ENCODE measurements at regions of chr3 and their contacts with region 1.

Region 1: DNA sequence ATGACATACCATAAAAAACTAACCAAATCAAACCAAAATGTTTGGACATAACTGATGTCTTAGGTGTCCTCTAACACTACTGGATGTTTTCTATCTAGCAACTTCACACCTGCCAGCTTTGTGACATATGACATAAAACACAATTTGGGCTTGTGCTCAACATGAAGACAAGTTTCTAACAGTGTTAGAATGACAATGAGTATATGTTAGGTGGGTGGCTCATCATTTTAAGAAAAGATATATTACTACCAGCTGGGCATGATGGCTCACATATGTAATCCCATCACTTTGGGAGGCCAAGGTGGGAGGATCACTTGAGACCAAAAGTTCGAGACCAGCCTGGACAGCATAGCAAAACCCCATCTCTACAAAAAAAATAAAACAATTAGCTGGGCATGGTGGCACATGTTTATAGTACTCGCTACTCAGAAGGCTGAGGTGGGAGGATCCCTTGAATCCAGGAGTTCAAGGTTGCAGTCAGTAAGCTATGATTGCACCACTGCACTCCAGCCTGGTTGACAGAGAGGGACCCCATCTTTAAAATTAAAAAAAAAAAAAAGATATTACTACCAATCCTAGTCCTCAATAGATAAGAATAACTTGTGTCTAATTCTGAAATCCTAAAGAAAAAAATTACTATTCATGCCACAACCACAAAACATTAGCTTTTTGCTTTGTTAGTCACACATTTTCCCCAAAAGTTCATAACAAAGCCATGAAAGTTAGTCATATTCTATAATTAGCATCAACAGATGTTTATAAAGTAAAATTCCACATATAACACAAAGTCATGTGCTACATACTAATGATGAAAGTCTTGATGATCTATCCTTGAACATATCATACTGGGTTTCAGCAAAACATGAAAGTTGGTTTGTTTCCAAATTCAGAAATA is 59.9 kb downstream of the LRRFIP2 start:
- DNase-seq: peak; percentile 6
- H3K4me3 Mint-ChIP-seq: no peak overlapping the region
- H3K27ac Mint-ChIP-seq: no peak overlapping the region
- H3K4me1 Mint-ChIP-seq: peaks cover 21% of the 10 kb centered on the region
- H3K27me3 Mint-ChIP-seq: no peaks in the 10 kb centered on the region

Region 2: GRCh38 chr3:37054370-37054769 is 60.1 kb before region 1 on chr3:
- CTCF ChIA-PET with region 1: no interaction called
- intact Hi-C with region 1: loop called (anchors 2 kb)
- DNase-seq: no peak
- H3K4me3 Mint-ChIP-seq: no peak overlapping the region
- H3K27ac Mint-ChIP-seq: peak overlapping the region; percentile 66
- H3K4me1 Mint-ChIP-seq: peaks cover 13% of the 10 kb centered on the region
- H3K27me3 Mint-ChIP-seq: no peaks in the 10 kb centered on the region

Region 3: GRCh38 chr3:37129871-37130270 is 15.4 kb after region 1 on chr3:
- CTCF ChIA-PET with region 1: no interaction called
- intact Hi-C with region 1: no loop called
- DNase-seq: no peak
- H3K4me3 Mint-ChIP-seq: no peak overlapping the region
- H3K27ac Mint-ChIP-seq: no peak overlapping the region
- H3K4me1 Mint-ChIP-seq: peaks cover 10% of the 10 kb centered on the region
- H3K27me3 Mint-ChIP-seq: no peaks in the 10 kb centered on the region

Region 4: DNA sequence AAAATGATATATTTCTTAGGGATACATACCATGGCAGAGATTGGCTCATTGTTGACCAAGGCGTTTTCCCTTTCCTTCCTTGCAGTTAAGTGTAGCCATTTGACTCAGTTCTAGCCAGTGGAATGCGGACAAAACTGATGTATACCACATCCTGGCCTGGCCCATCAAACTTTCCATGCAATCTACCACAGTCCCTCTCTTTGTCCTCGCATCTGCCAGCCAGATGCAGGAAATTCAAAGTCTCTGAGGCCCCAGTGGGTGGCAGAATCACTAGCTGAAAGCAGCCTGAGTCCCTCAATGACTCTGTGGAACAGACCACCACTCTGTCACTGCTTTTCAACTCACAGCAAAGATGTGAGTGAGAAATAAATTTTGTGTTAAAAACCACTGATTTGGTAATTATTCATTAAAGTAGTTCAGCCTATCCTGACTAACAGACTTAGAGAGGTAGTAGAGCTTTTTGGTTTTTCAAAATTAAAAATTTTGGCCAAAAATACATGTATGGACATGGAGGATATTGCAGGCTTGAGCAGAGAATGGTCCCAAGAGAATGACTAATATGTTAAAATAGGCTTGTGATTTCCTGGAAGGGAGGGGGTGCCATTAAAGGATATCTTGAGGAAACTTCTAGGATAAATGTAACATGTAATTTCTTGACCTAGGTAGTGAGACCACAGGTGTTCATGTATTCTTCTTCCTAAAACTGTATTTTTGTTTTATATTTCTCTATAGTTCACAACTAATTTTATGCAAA is 48.9 kb after region 1 on chr3:
- CTCF ChIA-PET with region 1: interaction called, 4 read pairs
- intact Hi-C with region 1: loop called (anchors 2 kb)
- DNase-seq: peak; percentile 49
- H3K4me3 Mint-ChIP-seq: no peak overlapping the region
- H3K27ac Mint-ChIP-seq: no peak overlapping the region
- H3K4me1 Mint-ChIP-seq: peaks cover 30% of the 10 kb centered on the region
- H3K27me3 Mint-ChIP-seq: no peaks in the 10 kb centered on the region

Region 5: DNA sequence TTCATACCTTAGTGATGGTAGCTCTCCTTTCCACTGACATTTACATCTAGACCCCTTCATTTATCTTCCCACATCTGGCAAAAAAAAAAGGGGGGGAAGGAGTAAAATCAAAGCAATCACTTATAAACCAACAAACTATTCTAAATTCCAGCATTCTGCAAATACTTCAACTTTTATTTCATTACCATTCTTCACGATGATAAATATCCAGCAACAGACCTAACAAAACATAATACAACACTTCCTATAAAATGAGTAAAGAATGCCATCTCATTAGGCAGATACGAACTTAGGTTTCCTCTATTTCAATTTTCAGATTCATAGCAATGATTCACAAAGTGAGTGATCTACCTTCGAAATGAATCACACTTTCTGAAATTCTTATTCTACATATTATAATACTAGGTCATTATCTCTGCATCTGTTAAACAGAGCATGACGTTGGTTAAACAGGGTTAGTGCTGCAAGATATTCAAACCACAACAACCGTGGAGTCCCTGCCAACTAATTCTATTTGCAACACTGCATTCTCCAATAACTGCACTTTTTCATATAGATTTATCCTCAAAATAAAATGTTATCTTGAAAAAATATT is 60.1 kb after region 1 on chr3 and contains the start of gene LRRFIP2:
- CTCF ChIA-PET with region 1: no interaction called
- intact Hi-C with region 1: loop called (anchors 1 kb)
- DNase-seq: peak; percentile 49
- H3K4me3 Mint-ChIP-seq: peak within 1 kb of the TSS; percentile 82
- H3K27ac Mint-ChIP-seq: peak within 1 kb of the TSS; percentile 50
- H3K4me1 Mint-ChIP-seq: peaks cover 43% of the 10 kb centered on the region
- H3K27me3 Mint-ChIP-seq: no peaks in the 10 kb centered on the region
- total RNA-seq, gene LRRFIP2: 13.3 to 15.3 TPM

Region 6: DNA sequence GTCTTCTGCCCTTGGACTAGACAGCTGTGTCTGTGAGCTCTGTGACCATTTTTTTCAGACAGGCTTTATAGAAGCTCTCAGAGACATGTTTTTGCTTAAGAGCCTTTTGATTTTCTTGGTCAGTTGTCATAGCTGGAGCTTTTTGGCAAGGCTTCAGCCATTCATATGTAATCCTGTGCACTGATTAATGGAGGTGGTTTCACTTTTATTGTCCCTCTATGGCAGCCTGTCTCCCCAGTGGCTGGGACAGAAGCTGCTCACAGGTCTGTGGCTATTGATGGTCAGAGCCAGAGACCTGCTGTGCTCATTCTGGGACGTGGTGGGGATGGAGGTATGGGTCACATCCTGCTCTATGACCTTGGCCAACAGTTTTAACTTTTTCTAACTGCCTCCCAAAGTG is 286.4 kb after region 1 on chr3:
- CTCF ChIA-PET with region 1: no interaction called
- intact Hi-C with region 1: no loop called
- DNase-seq: no peak
- H3K4me3 Mint-ChIP-seq: no peak overlapping the region
- H3K27ac Mint-ChIP-seq: no peak overlapping the region
- H3K4me1 Mint-ChIP-seq: no peaks in the 10 kb centered on the region
- H3K27me3 Mint-ChIP-seq: no peaks in the 10 kb centered on the region